ENCODE measurements at regions of chr1 and their contacts with region 1.

Region 1: GRCh38 chr1:248622570-248623001 is 12.3 kb downstream of the OR2T11 start:
- DNase-seq: peak; percentile 64
- CTCF ChIP-seq: peak; percentile 51

Region 2: GRCh38 chr1:247740721-247741120 is 881.9 kb before region 1 on chr1:
- in situ Hi-C with region 1: no loop called
- DNase-seq: no peak
- CTCF ChIP-seq: no peak

Region 3: GRCh38 chr1:248404024-248404423 is 218.6 kb before region 1 on chr1:
- in situ Hi-C with region 1: loop called (anchors 10 kb)
- DNase-seq: no peak
- CTCF ChIP-seq: no peak

Region 4: DNA sequence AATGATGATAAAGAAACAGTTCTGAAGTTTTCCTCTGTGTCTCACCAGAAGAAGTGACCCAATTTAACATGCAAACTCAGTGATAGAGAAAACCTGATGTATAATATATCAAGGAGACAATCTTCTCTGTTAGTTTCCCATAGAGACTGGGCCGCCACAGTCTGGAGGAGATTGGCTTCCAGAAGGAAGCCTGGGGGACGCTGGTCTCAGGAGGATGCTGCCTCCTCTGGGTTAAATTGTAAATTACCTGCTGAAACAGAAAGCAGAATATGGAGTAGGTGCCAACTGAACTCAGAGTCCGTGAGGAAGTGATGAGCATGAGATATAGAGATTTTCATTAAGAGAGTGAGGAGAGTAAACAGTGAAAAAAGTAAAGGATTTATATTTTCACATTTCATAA is 64.2 kb after region 1 on chr1:
- in situ Hi-C with region 1: loop called (anchors 10 kb)
- DNase-seq: peak; percentile 60
- CTCF ChIP-seq: peak; percentile 55